Activated naive CD4-positive, alpha-beta T cell treated with anti-CD3 and anti-CD28 coated beads for 36 hours (primary cell): ENCODE measurements at regions of chr11 and their contacts with region 1.

Region 1: DNA sequence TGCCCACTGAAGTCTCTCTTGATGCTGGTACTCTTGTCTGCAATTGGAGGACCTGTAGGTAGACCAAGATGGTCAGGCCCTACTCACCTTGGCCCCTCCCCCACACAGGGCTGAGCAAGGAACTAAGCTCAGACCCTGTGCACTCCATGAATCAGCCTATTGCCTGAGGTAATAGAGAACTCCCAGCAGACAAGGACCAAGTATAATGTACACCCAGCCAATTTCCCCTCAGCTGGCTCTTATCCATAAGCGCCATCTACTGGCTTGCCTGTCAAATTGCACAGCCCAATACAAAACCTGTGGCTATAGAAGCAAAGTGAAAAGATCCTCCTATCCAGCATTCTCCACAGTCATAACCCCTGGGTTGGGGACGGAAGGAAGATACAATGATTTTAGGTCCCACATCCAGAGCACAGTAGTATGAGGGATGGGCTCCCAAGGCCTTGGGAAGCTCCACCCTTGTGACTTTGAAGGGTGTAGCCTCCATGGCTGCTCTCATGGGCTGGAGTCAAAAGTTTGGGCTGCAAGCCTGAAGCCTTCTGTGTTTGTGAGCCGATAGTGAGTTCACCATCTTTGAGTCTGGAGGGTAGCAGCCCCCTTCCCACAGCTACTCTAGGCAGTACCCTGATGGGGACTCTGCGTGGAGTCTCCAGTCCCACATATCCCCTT is 56.0 kb downstream of the GLYATL2 start:
- DNase-seq: peak; percentile 66
- H3K4me3 Mint-ChIP-seq: no peak overlapping the region
- H3K27ac Mint-ChIP-seq: no peak overlapping the region
- H3K4me1 Mint-ChIP-seq: no peaks in the 10 kb centered on the region
- H3K27me3 Mint-ChIP-seq: peaks cover 5% of the 10 kb centered on the region

Region 2: GRCh38 chr11:58567889-58568512 is 220.5 kb before region 1 on chr11:
- CTCF ChIA-PET with region 1: interaction called, 11 read pairs
- intact Hi-C with region 1: no loop called
- DNase-seq: peak; percentile 83
- H3K4me3 Mint-ChIP-seq: peak overlapping the region; percentile 0
- H3K27ac Mint-ChIP-seq: peak overlapping the region; percentile 67
- H3K4me1 Mint-ChIP-seq: peaks cover 63% of the 10 kb centered on the region
- H3K27me3 Mint-ChIP-seq: no peaks in the 10 kb centered on the region

Region 3: GRCh38 chr11:58675334-58676155 is 112.9 kb before region 1 on chr11:
- CTCF ChIA-PET with region 1: interaction called, 3 read pairs
- intact Hi-C with region 1: loop called (anchors 1 kb)
- DNase-seq: peak; percentile 84
- H3K4me3 Mint-ChIP-seq: no peak overlapping the region
- H3K27ac Mint-ChIP-seq: no peak overlapping the region
- H3K4me1 Mint-ChIP-seq: no peaks in the 10 kb centered on the region
- H3K27me3 Mint-ChIP-seq: no peaks in the 10 kb centered on the region

Region 4: DNA sequence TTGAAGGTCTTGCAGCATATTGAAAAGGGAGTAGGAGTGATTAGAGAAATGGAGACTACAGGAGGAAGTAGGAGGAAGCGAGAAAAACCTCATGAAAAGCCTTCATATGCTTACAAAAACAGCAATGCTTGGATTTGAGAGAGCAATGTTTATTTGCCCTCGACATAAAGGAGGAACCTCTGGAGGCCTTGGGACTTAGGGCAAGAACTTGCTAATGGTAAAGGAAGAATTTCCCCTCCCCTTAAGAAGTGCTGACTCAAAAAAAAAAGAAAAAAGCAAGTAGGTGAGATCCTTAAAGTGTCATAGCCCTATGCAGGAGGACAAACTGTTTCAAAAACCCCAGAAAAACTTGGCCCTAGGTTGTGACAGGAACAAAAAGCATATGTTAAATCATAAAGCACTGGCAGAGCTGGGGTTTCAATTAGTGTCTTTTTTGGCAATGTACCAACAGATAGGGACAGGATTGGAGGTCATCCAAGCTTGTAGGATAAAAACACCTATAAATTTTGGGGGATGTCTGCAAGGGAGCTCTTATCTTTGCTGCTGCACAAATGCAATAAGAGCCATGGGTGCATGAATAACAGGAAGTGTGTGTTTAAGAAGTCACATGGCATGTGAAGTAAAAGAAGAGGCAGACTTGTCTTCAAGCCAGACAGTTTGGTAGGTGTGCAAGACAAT is 61.6 kb before region 1 on chr11:
- CTCF ChIA-PET with region 1: interaction called, 3 read pairs
- intact Hi-C with region 1: loop called (anchors 5 kb)
- DNase-seq: peak; percentile 13
- H3K4me3 Mint-ChIP-seq: no peak overlapping the region
- H3K27ac Mint-ChIP-seq: peak overlapping the region; percentile 50
- H3K4me1 Mint-ChIP-seq: peaks cover 44% of the 10 kb centered on the region
- H3K27me3 Mint-ChIP-seq: no peaks in the 10 kb centered on the region

Region 5: DNA sequence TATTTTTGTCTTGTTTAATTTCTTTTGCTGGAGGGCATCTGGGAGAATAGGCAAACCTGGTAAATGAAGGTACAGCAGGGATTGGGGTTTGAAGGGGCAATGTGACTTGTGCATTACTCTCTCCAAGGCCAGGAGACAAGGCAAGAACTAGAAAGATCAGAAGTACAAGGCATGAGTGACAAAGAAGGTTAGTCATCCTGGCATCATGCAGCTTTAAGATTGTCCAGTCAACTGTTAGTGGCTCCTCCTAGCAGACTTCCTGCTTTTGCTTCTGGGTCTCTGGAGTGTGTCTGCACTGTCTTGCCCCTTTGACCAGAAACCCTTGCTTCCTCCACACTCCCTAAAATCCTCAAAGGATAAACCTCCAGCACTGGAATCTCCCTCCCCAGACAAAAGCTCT is 123.6 kb after region 1 on chr11:
- CTCF ChIA-PET with region 1: no interaction called
- intact Hi-C with region 1: no loop called
- DNase-seq: no peak
- H3K4me3 Mint-ChIP-seq: no peak overlapping the region
- H3K27ac Mint-ChIP-seq: no peak overlapping the region
- H3K4me1 Mint-ChIP-seq: no peaks in the 10 kb centered on the region
- H3K27me3 Mint-ChIP-seq: peaks cover 37% of the 10 kb centered on the region

Region 6: DNA sequence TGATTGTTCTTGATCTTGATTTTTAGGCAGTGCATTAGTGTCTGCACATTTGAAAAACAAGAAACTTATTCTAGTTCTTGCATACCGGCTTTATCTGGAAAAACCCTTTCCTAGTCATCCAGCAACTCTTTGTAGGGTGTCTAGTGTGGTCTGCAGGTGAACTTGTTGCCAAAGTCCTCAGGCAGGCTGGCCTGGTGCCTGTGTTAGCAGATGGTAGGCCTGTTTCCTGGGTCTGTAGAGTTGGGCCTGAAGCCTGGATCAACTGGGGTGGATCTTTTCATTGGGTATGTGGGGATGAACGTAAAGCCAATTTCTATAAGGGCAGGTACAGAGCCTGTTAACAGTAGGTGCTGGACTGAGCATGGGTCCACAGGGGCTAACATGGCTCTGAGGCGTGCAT is 145.2 kb after region 1 on chr11:
- CTCF ChIA-PET with region 1: no interaction called
- intact Hi-C with region 1: no loop called
- DNase-seq: no peak
- H3K4me3 Mint-ChIP-seq: no peak overlapping the region
- H3K27ac Mint-ChIP-seq: no peak overlapping the region
- H3K4me1 Mint-ChIP-seq: no peaks in the 10 kb centered on the region
- H3K27me3 Mint-ChIP-seq: peaks cover 5% of the 10 kb centered on the region

Region 7: GRCh38 chr11:59053387-59053786 is 264.9 kb after region 1 on chr11:
- CTCF ChIA-PET with region 1: no interaction called
- intact Hi-C with region 1: loop called (anchors 1 kb)
- DNase-seq: peak; percentile 88
- H3K4me3 Mint-ChIP-seq: no peak overlapping the region
- H3K27ac Mint-ChIP-seq: no peak overlapping the region
- H3K4me1 Mint-ChIP-seq: peaks cover 3% of the 10 kb centered on the region
- H3K27me3 Mint-ChIP-seq: peaks cover 22% of the 10 kb centered on the region